Heart left ventricle (tissue), 16 donors: ENCODE measurements at regions of chr14 and their contacts with region 1.

Region 1: DNA sequence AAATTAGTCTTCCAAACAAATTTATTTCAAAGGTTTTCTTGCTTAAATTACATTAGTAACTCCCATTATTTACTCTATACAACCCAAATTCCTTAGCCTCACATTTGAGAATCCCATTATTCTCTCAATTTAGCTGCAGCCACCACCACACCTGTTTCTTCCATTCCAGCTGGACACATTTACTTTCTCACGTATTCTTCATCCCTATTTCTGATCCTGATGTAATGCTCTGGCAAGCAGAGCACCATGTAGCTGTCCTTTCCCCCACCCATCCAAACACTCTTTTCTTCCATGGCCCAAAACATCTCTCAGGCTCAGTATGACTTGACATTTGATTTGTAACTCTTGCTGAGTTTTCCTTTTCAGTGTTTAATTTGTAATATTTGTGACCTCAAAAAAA is 240.2 kb upstream of the CLEC14A start:
- DNase-seq: no peak
- ATAC-seq: no peak
- H3K4me3 ChIP-seq: no peak overlapping the region
- H3K27ac ChIP-seq: no peak overlapping the region
- H3K4me1 ChIP-seq: no peaks in the 10 kb centered on the region
- H3K27me3 ChIP-seq: no peaks in the 10 kb centered on the region
- CTCF ChIP-seq: no peak
- POLR2A ChIP-seq: no peak

Region 2: GRCh38 chr14:38517426-38517825 is 21.3 kb after region 1 on chr14:
- intact Hi-C with region 1: loop called in 1 of 10 experiments (anchors 2 kb)
- DNase-seq: no peak
- ATAC-seq: no peak
- H3K4me3 ChIP-seq: no peak overlapping the region
- H3K27ac ChIP-seq: no peak overlapping the region
- H3K4me1 ChIP-seq: no peaks in the 10 kb centered on the region
- H3K27me3 ChIP-seq: no peaks in the 10 kb centered on the region
- CTCF ChIP-seq: no peak
- POLR2A ChIP-seq: no peak

Region 3: DNA sequence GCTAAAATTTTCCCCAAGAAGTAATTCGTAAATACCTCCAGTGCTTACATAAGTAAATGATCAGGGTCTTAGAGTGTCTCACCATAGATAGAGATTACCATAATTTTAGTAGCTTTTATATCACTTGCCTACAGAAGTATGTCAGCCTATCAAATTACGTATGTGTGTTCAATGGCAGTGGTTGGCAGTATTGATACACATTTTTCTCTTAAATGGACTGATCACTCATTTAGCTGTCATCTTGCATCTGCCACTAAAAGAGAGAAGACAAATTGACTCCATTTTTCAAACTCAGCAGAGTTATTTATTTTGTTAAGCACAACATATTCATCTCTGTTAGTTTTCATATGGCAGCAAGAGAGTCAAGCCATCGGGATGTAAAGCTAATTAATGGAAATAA is 172.9 kb after region 1 on chr14:
- intact Hi-C with region 1: no loop called
- DNase-seq: no peak
- ATAC-seq: no peak
- H3K4me3 ChIP-seq: no peak overlapping the region
- H3K27ac ChIP-seq: no peak overlapping the region
- H3K4me1 ChIP-seq: no peaks in the 10 kb centered on the region
- H3K27me3 ChIP-seq: no peaks in the 10 kb centered on the region
- CTCF ChIP-seq: no peak
- POLR2A ChIP-seq: no peak